Activated naive CD4-positive, alpha-beta T cell treated with anti-CD3 and anti-CD28 coated beads for 36 hours (primary cell): ENCODE measurements at regions of chr20 and their contacts with region 1.

Region 1: GRCh38 chr20:2688041-2688591 is 4.5 kb upstream of the EBF4 start:
- DNase-seq: peak; percentile 91
- H3K4me3 Mint-ChIP-seq: no peak overlapping the region
- H3K27ac Mint-ChIP-seq: no peak overlapping the region
- H3K4me1 Mint-ChIP-seq: peaks cover 15% of the 10 kb centered on the region
- H3K27me3 Mint-ChIP-seq: peaks cover 14% of the 10 kb centered on the region

Region 2: DNA sequence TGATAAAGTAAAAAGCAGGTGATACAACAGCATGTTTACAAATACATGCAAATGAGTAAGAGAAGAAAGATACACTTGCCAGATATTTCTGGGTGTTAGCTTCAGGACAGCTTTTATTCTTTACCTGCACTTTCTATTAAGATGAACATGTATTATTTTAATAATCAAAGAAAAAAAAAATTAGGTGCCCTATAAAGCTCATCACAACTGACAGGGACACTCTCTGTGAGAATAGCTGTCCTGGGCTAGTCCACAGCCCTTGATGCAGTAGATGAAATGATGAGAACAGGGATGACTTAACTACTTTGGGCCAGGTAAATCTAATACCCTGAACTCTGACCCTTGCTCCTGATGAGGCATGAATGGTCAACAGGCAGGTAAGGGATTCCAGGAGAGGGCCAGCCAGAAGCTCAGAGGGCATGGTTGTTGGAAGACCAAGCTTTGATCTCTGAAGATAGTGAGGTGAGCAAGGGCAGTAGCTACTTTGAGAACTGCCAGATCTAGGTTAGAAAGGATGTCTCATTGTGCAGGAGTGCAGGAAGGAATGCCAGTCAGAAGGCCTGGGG is 1237.1 kb before region 1 on chr20:
- CTCF ChIA-PET with region 1: no interaction called
- intact Hi-C with region 1: no loop called
- DNase-seq: no peak
- H3K4me3 Mint-ChIP-seq: no peak overlapping the region
- H3K27ac Mint-ChIP-seq: no peak overlapping the region
- H3K4me1 Mint-ChIP-seq: no peaks in the 10 kb centered on the region
- H3K27me3 Mint-ChIP-seq: no peaks in the 10 kb centered on the region

Region 3: DNA sequence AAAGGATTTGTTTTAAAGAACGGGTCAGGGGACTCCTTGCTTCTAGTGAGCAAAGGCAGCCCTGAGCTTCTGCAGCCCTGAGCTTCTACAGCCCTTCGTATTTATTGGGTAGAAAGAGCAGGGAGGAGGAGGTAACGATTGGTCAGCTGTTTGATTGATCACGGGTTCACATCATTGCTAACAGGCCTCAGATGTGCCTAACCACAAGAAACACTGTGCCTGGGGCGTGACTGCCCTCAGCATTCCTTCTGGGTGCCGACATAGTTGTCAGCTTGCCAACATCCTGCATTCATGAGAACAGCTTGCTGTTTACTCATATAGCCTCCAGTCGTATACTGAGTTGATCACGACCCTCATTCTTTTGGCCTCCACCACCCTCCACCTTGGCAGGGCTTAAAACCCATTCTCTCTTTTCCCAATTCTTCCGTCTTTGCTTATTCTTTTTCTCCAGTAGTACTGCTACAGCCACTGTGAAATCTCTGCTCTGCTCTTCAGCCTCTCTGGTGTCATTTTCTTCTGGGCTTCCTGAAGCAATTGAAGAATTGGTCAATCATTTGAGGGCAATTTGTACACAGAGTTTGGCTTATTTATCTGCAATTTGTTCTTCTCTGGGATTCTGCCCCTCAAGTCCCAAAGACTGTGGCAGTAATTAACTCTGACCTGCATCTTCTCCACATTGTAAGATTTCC is 61.1 kb before region 1 on chr20:
- CTCF ChIA-PET with region 1: no interaction called
- intact Hi-C with region 1: no loop called
- DNase-seq: no peak
- H3K4me3 Mint-ChIP-seq: no peak overlapping the region
- H3K27ac Mint-ChIP-seq: no peak overlapping the region
- H3K4me1 Mint-ChIP-seq: no peaks in the 10 kb centered on the region
- H3K27me3 Mint-ChIP-seq: peaks cover 9% of the 10 kb centered on the region

Region 4: GRCh38 chr20:2671977-2672376 is 16.1 kb before region 1 on chr20:
- CTCF ChIA-PET with region 1: interaction called, 16 read pairs
- intact Hi-C with region 1: no loop called
- DNase-seq: no peak
- H3K4me3 Mint-ChIP-seq: no peak overlapping the region
- H3K27ac Mint-ChIP-seq: no peak overlapping the region
- H3K4me1 Mint-ChIP-seq: no peaks in the 10 kb centered on the region
- H3K27me3 Mint-ChIP-seq: no peaks in the 10 kb centered on the region

Region 5: DNA sequence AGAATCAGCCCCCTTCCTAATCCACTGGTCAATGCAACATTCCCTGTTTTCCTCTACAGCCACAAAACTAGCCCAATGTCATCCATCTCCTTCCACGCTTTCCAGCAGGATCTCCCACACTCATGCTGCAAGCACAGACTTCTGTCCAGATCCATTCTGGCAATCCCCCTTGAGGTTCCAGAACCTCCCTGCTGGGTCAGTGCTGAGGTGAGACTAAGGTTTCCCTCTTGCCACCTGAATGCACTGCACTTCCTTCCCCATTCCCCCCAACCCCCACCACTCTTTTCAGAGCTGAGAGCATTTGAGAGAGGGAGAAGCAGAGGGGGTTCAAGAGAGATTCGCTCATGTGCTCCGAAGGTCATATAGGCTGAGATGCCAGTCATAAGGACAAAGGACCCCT is 48.3 kb after region 1 on chr20:
- CTCF ChIA-PET with region 1: interaction called, 67 read pairs
- intact Hi-C with region 1: no loop called
- DNase-seq: no peak
- H3K4me3 Mint-ChIP-seq: no peak overlapping the region
- H3K27ac Mint-ChIP-seq: no peak overlapping the region
- H3K4me1 Mint-ChIP-seq: peaks cover 24% of the 10 kb centered on the region
- H3K27me3 Mint-ChIP-seq: no peaks in the 10 kb centered on the region

Region 6: DNA sequence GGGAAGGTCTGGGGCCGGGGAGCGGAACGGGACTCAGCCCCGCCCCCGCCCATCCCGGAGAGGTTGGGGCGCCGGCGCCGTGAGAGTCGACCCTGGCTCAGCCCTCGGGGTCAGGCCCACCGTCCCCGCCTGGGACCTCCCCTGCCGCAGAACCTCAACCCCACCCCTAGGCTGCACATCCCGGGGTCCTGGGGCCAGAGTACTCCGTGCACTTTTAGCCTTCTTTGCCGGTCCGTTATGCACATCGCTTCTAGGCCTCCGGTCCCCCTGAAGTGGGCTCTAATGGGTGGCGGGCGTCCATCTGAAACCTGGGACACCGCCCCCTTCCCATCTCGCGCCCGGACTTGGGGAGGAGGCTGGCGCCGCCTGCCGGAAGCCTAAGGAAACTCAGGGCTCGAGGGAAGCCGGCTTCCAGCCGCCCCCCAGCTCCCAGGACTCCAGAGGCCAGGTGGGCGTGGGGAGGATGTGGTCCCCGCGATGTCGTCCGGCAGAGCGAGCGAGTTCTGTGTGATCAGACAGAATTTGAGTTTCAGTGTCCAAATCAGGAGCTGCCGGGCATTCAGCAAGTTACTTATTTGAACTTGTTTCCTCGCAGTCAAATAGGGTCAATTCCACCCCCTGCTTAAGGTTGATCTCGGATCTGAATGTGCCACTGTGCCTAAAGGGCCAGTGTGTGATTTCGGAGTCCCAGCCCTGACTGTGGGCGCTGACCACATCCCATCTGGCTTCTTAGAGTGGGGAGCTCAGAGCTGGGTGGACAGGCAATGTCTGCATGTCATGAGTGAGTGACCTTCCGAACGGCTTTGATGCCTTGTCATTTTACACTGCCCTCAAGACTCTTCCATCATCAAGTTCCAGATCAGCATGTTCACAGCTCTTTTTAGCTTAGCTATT is 64.7 kb after region 1 on chr20:
- CTCF ChIA-PET with region 1: interaction called, 24 read pairs
- intact Hi-C with region 1: loop called (anchors 1 kb)
- DNase-seq: peak; percentile 56
- H3K4me3 Mint-ChIP-seq: peak overlapping the region; percentile 75
- H3K27ac Mint-ChIP-seq: no peak overlapping the region
- H3K4me1 Mint-ChIP-seq: peaks cover 18% of the 10 kb centered on the region
- H3K27me3 Mint-ChIP-seq: peaks cover 20% of the 10 kb centered on the region

Region 7: GRCh38 chr20:3000852-3001523 is 312.9 kb after region 1 on chr20:
- CTCF ChIA-PET with region 1: interaction called, 9 read pairs
- intact Hi-C with region 1: loop called (anchors 2 kb)
- DNase-seq: peak; percentile 18
- H3K4me3 Mint-ChIP-seq: no peak overlapping the region
- H3K27ac Mint-ChIP-seq: no peak overlapping the region
- H3K4me1 Mint-ChIP-seq: no peaks in the 10 kb centered on the region
- H3K27me3 Mint-ChIP-seq: no peaks in the 10 kb centered on the region